ENCODE measurements at regions of chr6 and their contacts with region 1.

Region 1: DNA sequence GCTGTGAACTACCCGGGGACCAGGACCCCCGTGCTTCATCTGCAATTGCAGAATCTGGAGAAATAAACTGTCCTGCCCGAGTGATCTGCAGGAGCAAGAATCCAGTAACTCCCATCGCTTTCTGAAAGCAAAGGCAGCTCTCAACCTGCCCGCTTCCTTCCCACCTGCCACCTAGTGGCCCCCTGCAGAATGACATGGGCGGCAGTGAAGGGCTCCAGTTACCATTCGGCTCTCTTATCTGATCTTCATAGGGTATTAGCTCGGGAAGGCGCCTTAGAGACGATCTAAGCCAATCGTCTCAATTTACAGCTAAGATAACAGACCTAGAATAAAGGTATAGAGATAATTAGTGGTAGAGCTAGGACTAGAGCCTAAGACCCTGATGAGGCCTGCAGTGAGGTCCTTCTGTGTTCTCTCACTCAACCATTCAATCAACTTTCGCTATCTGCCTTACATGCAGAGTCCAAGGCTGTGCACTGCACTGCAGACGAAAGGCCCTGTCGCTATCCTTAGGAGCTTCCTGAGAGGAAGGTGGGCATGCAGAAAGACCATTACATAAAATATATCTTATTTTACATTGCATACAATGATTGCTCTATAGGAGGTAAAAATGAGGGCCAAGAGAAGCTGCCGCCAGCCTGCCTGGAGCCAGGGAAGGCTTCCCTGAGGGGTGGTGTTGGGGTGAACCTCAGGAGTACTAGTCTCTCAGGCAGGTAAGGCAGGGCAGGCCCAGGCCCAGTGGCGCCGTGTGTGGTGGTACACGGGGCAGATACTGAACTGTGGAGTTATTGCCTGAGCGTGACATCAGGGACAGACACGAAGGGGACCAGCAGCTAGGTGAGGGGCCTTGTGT is 7.1 kb upstream of the PSMG4 start:
- DNase-seq: peak; percentile 84 to 91
- H3K4me3 ChIP-seq: no peak overlapping the region
- H3K4me3 Mint-ChIP-seq: peak overlapping the region; percentile 59
- H3K27ac Mint-ChIP-seq: peak overlapping the region; percentile 31
- H3K4me1 ChIP-seq: peaks cover 18% of the 10 kb centered on the region
- H3K4me1 Mint-ChIP-seq: peaks cover 5% of the 10 kb centered on the region
- H3K27me3 ChIP-seq: no peaks in the 10 kb centered on the region; the same call in 1 of the 2 replicates
- H3K27me3 Mint-ChIP-seq: no peaks in the 10 kb centered on the region
- CTCF ChIP-seq: peak; percentile 95 to 96

Region 2: DNA sequence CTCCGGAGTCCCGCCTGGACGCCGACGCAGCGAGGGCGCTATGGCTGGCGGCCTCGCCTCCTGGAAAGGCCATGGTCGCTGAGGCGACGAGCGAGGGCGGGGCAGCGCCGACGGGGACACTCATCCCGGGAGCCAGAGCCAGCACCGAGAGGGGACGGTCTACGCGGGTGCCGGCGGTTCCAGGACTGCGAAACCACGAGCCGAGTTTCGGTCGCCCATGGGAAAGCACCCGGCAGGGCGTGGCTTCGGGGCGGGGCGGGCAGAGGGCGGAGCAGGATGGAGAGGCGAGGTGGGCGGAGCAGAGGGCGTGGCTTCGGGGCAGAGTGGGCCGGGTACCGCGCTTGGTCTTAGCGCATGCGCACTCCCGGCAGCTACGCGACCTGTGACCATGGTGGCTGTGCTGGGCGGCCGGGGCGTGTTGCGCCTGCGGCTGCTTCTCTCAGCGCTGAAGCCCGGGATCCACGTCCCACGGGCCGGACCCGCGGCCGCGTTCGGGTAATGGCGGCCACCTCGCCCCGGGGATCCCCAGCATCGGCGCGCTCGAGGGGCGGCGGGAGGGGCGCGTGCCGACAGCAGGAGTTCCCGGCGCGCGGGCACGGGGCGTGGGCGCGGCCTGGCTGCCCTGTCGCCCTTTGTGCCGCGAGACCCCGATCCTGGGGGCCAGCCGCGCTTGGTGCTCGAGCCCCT is 133.2 kb before region 1 on chr6 and contains the start of gene BPHL:
- CTCF ChIA-PET with region 1: interaction called, 5 read pairs
- POLR2A ChIA-PET with region 1: interaction called, 3 read pairs
- intact Hi-C with region 1: loop called (anchors 2 kb)
- DNase-seq: peak; percentile 96 to 98
- H3K4me3 ChIP-seq: peak within 1 kb of the TSS; percentile 75
- H3K4me3 Mint-ChIP-seq: peak within 1 kb of the TSS; percentile 91
- H3K27ac Mint-ChIP-seq: peak within 1 kb of the TSS; percentile 93
- H3K4me1 ChIP-seq: peaks cover 16% of the 10 kb centered on the region
- H3K4me1 Mint-ChIP-seq: peaks cover 16% of the 10 kb centered on the region
- H3K27me3 ChIP-seq: no peaks in the 10 kb centered on the region
- H3K27me3 Mint-ChIP-seq: no peaks in the 10 kb centered on the region
- CTCF ChIP-seq: no peak
- total RNA-seq, gene BPHL: 29.5 and 31.5 TPM in 2 replicates

Region 3: DNA sequence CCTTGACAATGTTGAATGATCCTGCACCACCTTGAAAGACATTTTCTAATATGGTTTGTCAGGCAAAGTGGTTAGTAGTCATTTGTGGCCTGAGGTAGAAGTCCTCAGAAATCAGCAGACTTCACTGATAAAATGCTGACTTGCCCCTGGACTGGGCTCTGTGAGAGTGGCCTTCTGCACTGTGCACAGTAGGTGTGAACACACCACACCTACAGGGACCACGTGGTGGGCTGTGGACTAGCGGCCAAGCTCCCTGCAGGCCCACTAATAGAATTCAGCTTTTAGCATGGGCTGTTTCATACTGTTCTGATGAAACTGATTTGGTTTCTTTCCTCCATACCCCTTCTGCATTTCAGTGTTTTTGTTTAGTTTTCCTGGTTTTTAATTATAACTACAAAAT is 125.9 kb before region 1 on chr6:
- CTCF ChIA-PET with region 1: interaction called, 5 read pairs
- POLR2A ChIA-PET with region 1: no interaction called
- intact Hi-C with region 1: loop called (anchors 1 kb)
- DNase-seq: no peak
- H3K4me3 ChIP-seq: no peak overlapping the region
- H3K4me3 Mint-ChIP-seq: no peak overlapping the region
- H3K27ac Mint-ChIP-seq: no peak overlapping the region
- H3K4me1 ChIP-seq: peaks cover under 1% of the 10 kb centered on the region; the same call in 1 of the 2 replicates
- H3K4me1 Mint-ChIP-seq: no peaks in the 10 kb centered on the region
- H3K27me3 ChIP-seq: no peaks in the 10 kb centered on the region
- H3K27me3 Mint-ChIP-seq: no peaks in the 10 kb centered on the region
- CTCF ChIP-seq: no peak

Region 4: GRCh38 chr6:3157131-3157927 is 94.4 kb before region 1 on chr6 and contains the start of gene TUBB2A:
- CTCF ChIA-PET with region 1: interaction called, 14 read pairs
- POLR2A ChIA-PET with region 1: interaction called, 15 read pairs
- intact Hi-C with region 1: no loop called
- DNase-seq: peak; percentile 75 to 92
- H3K4me3 ChIP-seq: peak within 1 kb of the TSS; percentile 61
- H3K4me3 Mint-ChIP-seq: peak within 1 kb of the TSS; percentile 77
- H3K27ac Mint-ChIP-seq: peak within 1 kb of the TSS; percentile 64
- H3K4me1 ChIP-seq: peaks cover 13% of the 10 kb centered on the region; the same call in 1 of the 2 replicates
- H3K4me1 Mint-ChIP-seq: peaks cover 16% of the 10 kb centered on the region
- H3K27me3 ChIP-seq: no peaks in the 10 kb centered on the region
- H3K27me3 Mint-ChIP-seq: no peaks in the 10 kb centered on the region
- CTCF ChIP-seq: peak in 1 of 2 experiments; percentile 33
- total RNA-seq, gene TUBB2A: 89.8 and 90.7 TPM in 2 replicates

Region 5: DNA sequence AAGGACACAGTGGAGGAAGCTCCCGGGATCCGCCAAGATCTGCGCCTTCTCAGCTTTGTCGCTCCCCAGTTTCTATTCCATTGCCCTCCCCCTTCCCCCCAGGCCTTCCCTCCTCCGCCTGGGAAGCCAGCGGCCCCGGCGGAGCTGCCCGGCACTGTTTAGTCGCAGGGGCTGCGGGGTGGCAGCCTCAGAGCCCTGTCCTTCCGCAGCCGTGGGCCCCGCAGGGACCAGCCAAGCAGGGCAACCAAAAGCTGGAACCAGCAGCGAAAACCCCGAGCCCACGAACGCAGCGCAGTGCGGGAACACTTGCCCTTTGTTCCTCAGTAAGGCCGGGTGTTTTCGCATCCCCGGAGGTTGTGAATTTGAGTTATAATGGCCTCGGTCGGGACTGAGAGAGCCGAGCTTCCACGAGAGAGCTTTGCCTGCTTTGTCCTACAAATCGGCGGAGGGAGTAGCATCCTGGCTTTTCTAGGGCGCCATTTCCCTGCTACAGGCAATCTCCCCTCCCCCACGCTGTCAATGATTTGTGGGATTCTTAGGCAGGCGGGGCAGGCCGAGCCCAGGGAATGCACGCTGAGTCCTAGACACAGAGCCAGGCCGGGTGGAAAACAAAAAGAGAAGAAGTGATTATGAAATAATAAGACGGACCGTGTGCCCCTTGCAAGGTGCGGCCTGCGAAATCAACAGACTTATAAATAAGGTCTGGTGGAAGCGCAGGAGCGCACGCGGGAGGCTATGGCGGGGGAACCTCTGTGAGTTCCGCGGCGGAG is 20.3 kb before region 1 on chr6:
- CTCF ChIA-PET with region 1: interaction called, 10 read pairs
- POLR2A ChIA-PET with region 1: interaction called, 7 read pairs
- intact Hi-C with region 1: loop called (anchors 1 kb)
- DNase-seq: peak; percentile 87 to 91
- H3K4me3 ChIP-seq: peak overlapping the region; percentile 45
- H3K4me3 Mint-ChIP-seq: peak overlapping the region; percentile 81
- H3K27ac Mint-ChIP-seq: peak overlapping the region; percentile 51
- H3K4me1 ChIP-seq: peaks cover 6% of the 10 kb centered on the region
- H3K4me1 Mint-ChIP-seq: peaks cover 7% of the 10 kb centered on the region
- H3K27me3 ChIP-seq: no peaks in the 10 kb centered on the region
- H3K27me3 Mint-ChIP-seq: peaks cover 6% of the 10 kb centered on the region
- CTCF ChIP-seq: no peak